Natural killer cell (primary cell): ENCODE measurements at regions of chr3 and their contacts with region 1.

Region 1: DNA sequence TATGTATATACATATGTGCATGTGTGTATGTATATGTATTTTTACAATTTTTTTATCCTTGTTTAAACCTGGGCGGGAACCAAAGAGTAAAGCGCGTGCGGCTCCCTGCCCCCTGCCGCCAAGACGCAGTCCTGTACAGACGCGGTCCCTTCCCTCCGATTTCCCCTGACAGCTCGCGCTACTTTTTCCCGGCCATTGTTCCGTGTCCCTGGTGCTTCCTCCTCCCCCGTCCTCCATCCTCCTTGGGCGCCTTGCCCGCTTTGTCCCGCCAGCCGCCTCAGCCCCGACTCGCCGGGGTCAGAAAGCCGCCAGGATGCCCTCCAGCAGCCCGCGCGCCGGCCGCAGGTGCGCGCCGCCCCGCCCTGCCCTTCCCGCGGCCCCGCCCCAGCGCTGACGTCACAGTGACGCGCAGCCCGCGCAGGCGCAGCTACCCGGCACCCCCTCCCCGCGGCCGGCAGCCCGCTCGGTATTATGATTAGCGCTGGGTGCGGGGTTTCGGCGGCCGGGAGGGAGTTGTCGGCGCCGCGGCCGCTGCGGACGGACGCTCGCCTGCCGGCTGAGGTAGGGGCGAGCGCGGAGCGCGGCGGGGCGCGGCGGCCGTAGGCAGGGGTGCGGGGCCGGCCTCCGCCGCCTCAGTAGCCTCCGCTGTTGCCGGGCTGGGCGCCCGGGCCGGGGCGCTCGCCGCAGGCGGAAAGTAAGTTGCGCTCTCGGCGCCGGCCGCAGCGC is at the start of gene SNRK:
- DNase-seq: peak; percentile 93 to 97
- ATAC-seq: peak; percentile 81 to 95 (median 88)
- H3K4me3 ChIP-seq: peak within 1 kb of the TSS; percentile 71
- H3K4me3 Mint-ChIP-seq: peak within 1 kb of the TSS; percentile 91
- H3K27ac ChIP-seq: peak within 1 kb of the TSS; percentile 92
- H3K27ac Mint-ChIP-seq: peak within 1 kb of the TSS; percentile 94 to 97
- H3K4me1 ChIP-seq: peaks cover 28% of the 10 kb centered on the region
- H3K4me1 Mint-ChIP-seq: peaks cover 39 to 48% of the 10 kb centered on the region in 2 donors
- H3K27me3 ChIP-seq: no peaks in the 10 kb centered on the region
- H3K27me3 Mint-ChIP-seq: no peaks in the 10 kb centered on the region
- CTCF ChIP-seq: peak; percentile 17
- total RNA-seq, gene SNRK: 177 to 209 (median 186) TPM

Region 2: GRCh38 chr3:43180027-43180426 is 106.3 kb before region 1 on chr3:
- intact Hi-C with region 1: loop called (anchors 2 kb)
- DNase-seq: peak; percentile 37 to 74
- ATAC-seq: peak; percentile 88 to 94 (median 90)
- H3K4me3 ChIP-seq: no peak overlapping the region
- H3K4me3 Mint-ChIP-seq: peak overlapping the region; percentile 80
- H3K27ac ChIP-seq: peak overlapping the region; percentile 79
- H3K27ac Mint-ChIP-seq: peak overlapping the region; percentile 83 to 88
- H3K4me1 ChIP-seq: peaks cover 43% of the 10 kb centered on the region
- H3K4me1 Mint-ChIP-seq: peaks cover 44 to 63% of the 10 kb centered on the region in 2 donors
- H3K27me3 ChIP-seq: no peaks in the 10 kb centered on the region
- H3K27me3 Mint-ChIP-seq: no peaks in the 10 kb centered on the region
- CTCF ChIP-seq: no peak

Region 3: DNA sequence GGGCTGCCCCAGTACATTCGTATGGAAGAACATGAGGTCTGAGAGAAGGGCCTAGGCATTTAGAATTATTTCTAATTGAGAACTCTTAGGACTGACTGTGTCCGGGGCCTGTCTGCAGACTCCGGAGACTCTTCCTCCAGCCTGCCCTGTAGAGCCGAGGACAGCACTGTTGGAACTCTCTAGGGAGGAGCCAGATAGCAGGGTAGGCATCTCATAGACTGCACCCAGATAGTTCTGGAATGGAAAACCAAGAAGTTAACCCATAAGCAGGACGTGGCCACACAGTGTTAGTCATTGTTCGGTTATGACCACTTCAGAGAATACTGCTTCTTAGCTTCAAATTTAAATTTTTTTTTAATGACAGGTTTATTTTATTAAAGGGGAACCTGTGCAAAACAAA is 59.6 kb after region 1 on chr3:
- intact Hi-C with region 1: loop called (anchors 2 kb)
- DNase-seq: no peak
- ATAC-seq: peak in 2 of 3 donors; percentile 31 to 34
- H3K4me3 ChIP-seq: no peak overlapping the region
- H3K4me3 Mint-ChIP-seq: peak overlapping the region; percentile 79
- H3K27ac ChIP-seq: peak overlapping the region; percentile 85
- H3K27ac Mint-ChIP-seq: peak overlapping the region; percentile 97 to 98
- H3K4me1 ChIP-seq: peaks cover 61% of the 10 kb centered on the region
- H3K4me1 Mint-ChIP-seq: peaks cover 79 to 83% of the 10 kb centered on the region in 2 donors
- H3K27me3 ChIP-seq: no peaks in the 10 kb centered on the region
- H3K27me3 Mint-ChIP-seq: no peaks in the 10 kb centered on the region
- CTCF ChIP-seq: no peak

Region 4: GRCh38 chr3:43477600-43477999 is 191.3 kb after region 1 on chr3:
- intact Hi-C with region 1: loop called (anchors 5 kb)
- DNase-seq: peak; percentile 69 to 89
- ATAC-seq: peak; percentile 90 to 98 (median 98)
- H3K4me3 ChIP-seq: no peak overlapping the region
- H3K4me3 Mint-ChIP-seq: peak overlapping the region; percentile 60
- H3K27ac ChIP-seq: peak overlapping the region; percentile 97
- H3K27ac Mint-ChIP-seq: peak overlapping the region; percentile 96 to 98
- H3K4me1 ChIP-seq: peaks cover 26% of the 10 kb centered on the region
- H3K4me1 Mint-ChIP-seq: peaks cover 63 to 65% of the 10 kb centered on the region in 2 donors
- H3K27me3 ChIP-seq: no peaks in the 10 kb centered on the region
- H3K27me3 Mint-ChIP-seq: no peaks in the 10 kb centered on the region
- CTCF ChIP-seq: no peak